Sciatic nerve (tissue), 2 donors: ENCODE measurements at regions of chr12 and their contacts with region 1.

Region 1: GRCh38 chr12:56230432-56231183 is 757 bp downstream of the SLC39A5 start:
- DNase-seq: no peak
- ATAC-seq: no peak

Region 2: GRCh38 chr12:56408799-56409417 is 178.3 kb after region 1 on chr12:
- intact Hi-C with region 1: no loop called
- DNase-seq: no peak
- ATAC-seq: no peak

Region 3: GRCh38 chr12:56420411-56420810 is 189.8 kb after region 1 on chr12:
- intact Hi-C with region 1: loop called (anchors 5 kb)
- DNase-seq: no peak
- ATAC-seq: no peak